ENCODE measurements at regions of chr2 and their contacts with region 1.

Region 1: GRCh38 chr2:160210599-160211138 is 10.6 kb upstream of the ITGB6 start:
- DNase-seq: peak; percentile 58 to 81
- ATAC-seq: peak; percentile 69 to 72 (median 72)
- H3K4me3 ChIP-seq: no peak overlapping the region
- H3K4me3 Mint-ChIP-seq: no peak overlapping the region
- H3K27ac ChIP-seq: no peak overlapping the region
- H3K27ac Mint-ChIP-seq: no peak overlapping the region
- H3K4me1 ChIP-seq: peaks cover 26% of the 10 kb centered on the region
- H3K4me1 Mint-ChIP-seq: peaks cover 47 to 50% of the 10 kb centered on the region in 2 donors
- H3K27me3 ChIP-seq: peaks cover 2% of the 10 kb centered on the region
- H3K27me3 Mint-ChIP-seq: peaks cover 19 to 28% of the 10 kb centered on the region in 2 donors
- CTCF ChIP-seq: peak; percentile 84

Region 2: GRCh38 chr2:160109936-160110673 is 100.6 kb before region 1 on chr2:
- intact Hi-C with region 1: loop called (anchors 2 kb)
- DNase-seq: peak in 1 of 2 donors; percentile 80
- ATAC-seq: peak; percentile 76 to 91 (median 79)
- H3K4me3 ChIP-seq: no peak overlapping the region
- H3K4me3 Mint-ChIP-seq: no peak overlapping the region
- H3K27ac ChIP-seq: no peak overlapping the region
- H3K27ac Mint-ChIP-seq: no peak overlapping the region
- H3K4me1 ChIP-seq: no peaks in the 10 kb centered on the region
- H3K4me1 Mint-ChIP-seq: no peaks in the 10 kb centered on the region
- H3K27me3 ChIP-seq: no peaks in the 10 kb centered on the region
- H3K27me3 Mint-ChIP-seq: peaks cover 0 to 7% of the 10 kb centered on the region in 2 donors
- CTCF ChIP-seq: peak; percentile 74

Region 3: DNA sequence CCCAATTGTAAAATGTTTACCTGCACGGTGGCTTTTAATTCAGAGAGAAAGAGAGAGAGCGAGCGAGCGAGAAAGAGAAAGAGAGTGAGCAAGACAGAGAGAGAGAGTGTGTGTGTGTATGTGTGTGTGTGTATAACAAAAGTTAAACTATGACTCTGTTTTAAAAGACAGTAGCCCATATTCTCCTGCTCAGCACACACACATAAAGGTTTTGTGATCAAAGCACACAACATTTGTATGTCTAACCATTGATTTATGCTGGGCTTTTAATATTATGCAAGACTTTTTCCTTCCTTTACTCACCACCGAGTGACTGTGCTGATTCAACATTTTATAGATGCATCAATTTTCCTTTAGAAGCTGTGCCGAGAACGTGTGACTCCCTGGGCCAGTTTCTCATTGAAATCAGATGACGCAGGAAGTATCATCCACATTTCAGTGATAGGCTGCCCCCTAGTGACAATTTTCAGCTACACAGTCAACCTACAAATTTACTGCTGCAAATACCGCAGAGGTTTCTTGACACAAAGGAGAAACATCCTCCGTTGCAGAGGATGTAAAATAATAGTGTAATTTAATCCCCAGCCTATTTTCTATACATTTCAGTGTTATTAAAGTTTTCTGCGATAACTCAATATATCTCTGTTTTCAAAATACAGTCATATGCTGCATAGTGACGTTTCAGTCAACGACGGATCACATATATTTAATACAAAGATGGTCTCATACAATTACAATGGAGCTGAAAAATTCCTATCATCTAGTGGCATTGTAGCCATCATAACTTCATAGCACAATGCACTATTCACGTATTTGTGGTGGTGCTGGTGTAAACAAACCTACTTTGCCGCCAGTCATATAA is 783.7 kb after region 1 on chr2:
- intact Hi-C with region 1: loop called (anchors 1 kb)
- DNase-seq: peak; percentile 36 to 89
- ATAC-seq: peak; percentile 85 to 95 (median 94)
- H3K4me3 ChIP-seq: no peak overlapping the region
- H3K4me3 Mint-ChIP-seq: no peak overlapping the region
- H3K27ac ChIP-seq: no peak overlapping the region
- H3K27ac Mint-ChIP-seq: peak overlapping the region in 1 of 2 donors; percentile 5
- H3K4me1 ChIP-seq: no peaks in the 10 kb centered on the region
- H3K4me1 Mint-ChIP-seq: peaks cover 9 to 10% of the 10 kb centered on the region in 2 donors
- H3K27me3 ChIP-seq: no peaks in the 10 kb centered on the region
- H3K27me3 Mint-ChIP-seq: no peaks in the 10 kb centered on the region
- CTCF ChIP-seq: peak; percentile 87